ENCODE measurements at regions of chr13 and their contacts with region 1.

Region 1: DNA sequence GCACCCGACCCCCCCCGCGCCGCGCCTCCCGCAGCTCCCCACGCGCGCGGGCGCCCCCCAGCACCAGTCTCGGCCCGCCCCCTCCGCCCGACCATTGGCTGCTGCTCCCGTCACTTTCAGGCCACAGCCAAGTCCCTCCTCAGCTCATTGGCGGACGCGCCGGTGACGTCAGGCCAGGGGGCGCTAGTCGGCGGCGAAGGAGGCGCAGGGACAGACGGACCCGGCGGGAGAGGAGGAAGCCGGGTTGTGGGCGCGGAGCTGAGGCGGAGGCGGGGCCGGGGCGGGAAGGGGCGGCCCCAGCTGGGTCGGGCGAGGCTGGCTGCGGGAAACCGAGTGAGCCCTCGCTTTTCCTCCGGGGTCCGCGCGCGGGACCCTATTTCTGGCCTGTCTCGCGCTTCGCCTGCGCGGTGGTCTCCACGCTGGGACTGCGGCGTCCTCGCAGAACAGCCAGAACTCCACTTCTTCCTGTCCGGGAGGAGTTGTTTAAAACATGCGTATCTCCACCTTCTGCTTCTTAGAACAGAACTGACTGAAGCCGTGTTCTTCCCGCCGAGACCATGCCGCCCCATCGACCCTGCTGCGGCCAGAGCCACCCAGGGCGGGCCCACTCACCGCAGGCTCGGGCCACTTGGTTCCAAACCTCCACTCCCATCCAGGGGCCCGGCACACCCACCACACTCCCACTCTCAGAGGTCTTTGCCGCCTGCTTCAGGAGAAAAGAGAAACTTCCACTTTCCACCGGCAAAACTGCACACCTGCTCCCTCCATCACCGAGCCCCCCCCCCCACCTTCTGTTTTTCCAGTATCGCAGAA is 459 bp upstream of the TMTC4 start:
- DNase-seq: peak; percentile 99 to 100 (median 100)
- ATAC-seq: peak; percentile 92
- H3K4me3 ChIP-seq: peak overlapping the region; percentile 88 to 98
- H3K4me3 Mint-ChIP-seq: peak overlapping the region; percentile 95
- H3K27ac ChIP-seq: peak overlapping the region; percentile 55 to 78
- H3K27ac Mint-ChIP-seq: peak overlapping the region; percentile 89
- H3K4me1 ChIP-seq: peaks cover 14% of the 10 kb centered on the region
- H3K4me1 Mint-ChIP-seq: peaks cover 29% of the 10 kb centered on the region
- H3K27me3 ChIP-seq: no peaks in the 10 kb centered on the region
- H3K27me3 Mint-ChIP-seq: no peaks in the 10 kb centered on the region
- CTCF ChIP-seq: no peak

Region 2: DNA sequence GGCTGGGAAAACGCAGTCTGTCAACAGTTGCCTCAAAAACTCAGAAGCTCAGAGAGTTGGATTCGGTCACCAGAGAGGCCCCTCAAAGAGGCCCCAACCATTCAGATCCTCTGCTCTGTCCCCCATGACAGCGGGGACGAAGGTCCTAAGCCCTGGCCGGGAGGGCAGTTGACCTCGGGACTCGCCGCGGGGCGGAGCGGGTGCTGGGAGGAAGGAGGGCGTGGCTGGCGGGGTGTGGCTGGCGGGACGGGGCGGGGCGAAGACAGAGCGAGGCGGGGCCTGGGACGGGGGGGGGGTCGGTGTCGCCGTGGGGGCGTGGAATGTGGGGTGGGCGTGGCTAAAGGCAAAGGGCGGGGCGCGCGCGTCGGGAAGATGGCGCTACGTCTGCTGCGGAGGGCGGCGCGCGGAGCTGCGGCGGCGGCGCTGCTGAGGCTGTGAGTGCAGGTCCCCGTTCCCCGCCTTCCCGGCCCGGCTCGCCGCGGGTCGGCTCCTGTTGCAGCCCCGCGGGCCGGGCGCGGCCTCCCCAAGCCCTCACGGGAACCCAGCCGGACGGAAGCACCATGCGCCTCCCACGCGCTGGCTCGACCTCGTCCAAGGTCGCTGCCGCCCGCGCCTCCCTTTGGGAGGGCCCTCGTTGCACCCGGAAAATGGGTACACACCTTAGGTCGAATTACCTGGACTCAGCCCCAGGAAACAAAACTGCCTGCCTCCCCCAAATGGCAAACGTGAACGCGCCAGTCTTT is 1068.6 kb before region 1 on chr13:
- CTCF ChIA-PET with region 1: no interaction called
- POLR2A ChIA-PET with region 1: interaction called, 3 read pairs
- intact Hi-C with region 1: loop called (anchors 1 kb)
- DNase-seq: peak; percentile 82 to 95 (median 91)
- ATAC-seq: peak; percentile 93
- H3K4me3 ChIP-seq: peak within 1 kb of the TSS; percentile 89 to 93
- H3K4me3 Mint-ChIP-seq: peak within 1 kb of the TSS; percentile 92
- H3K27ac ChIP-seq: peak within 1 kb of the TSS; percentile 72 to 81
- H3K27ac Mint-ChIP-seq: peak within 1 kb of the TSS; percentile 92
- H3K4me1 ChIP-seq: peaks cover 23% of the 10 kb centered on the region
- H3K4me1 Mint-ChIP-seq: peaks cover 45% of the 10 kb centered on the region
- H3K27me3 ChIP-seq: no peaks in the 10 kb centered on the region
- H3K27me3 Mint-ChIP-seq: no peaks in the 10 kb centered on the region
- CTCF ChIP-seq: no peak

Region 3: GRCh38 chr13:99995589-99996380 is 679.3 kb before region 1 on chr13:
- CTCF ChIA-PET with region 1: no interaction called
- POLR2A ChIA-PET with region 1: no interaction called
- intact Hi-C with region 1: loop called in 1 of 2 experiments (anchors 10 kb)
- DNase-seq: no peak
- ATAC-seq: no peak
- H3K4me3 ChIP-seq: no peak overlapping the region
- H3K4me3 Mint-ChIP-seq: no peak overlapping the region
- H3K27ac ChIP-seq: no peak overlapping the region
- H3K27ac Mint-ChIP-seq: no peak overlapping the region
- H3K4me1 ChIP-seq: no peaks in the 10 kb centered on the region
- H3K4me1 Mint-ChIP-seq: peaks cover 4% of the 10 kb centered on the region
- H3K27me3 ChIP-seq: peaks cover 67 to 73% of the 10 kb centered on the region in 2 experiments
- H3K27me3 Mint-ChIP-seq: peaks cover 73% of the 10 kb centered on the region
- CTCF ChIP-seq: no peak

Region 4: DNA sequence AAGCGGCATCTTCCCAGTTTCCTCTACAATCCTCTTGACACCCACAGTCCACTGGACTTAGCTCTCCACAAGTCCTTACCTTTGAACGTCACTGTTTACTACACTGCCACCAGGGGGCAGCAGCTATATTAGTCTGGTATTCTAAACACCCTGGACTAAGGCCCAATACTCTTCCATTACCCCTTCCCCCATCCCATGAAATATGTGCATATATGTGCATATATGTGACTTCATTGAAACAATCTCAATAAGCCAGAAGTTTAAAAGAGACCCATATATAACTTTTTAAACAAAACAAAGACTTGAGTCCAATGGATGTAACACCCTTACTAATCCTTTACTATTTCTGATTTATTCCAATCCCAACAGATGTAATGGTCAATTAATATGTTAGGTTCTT is 101.9 kb before region 1 on chr13:
- CTCF ChIA-PET with region 1: interaction called, 10 read pairs
- POLR2A ChIA-PET with region 1: interaction called, 4 read pairs
- intact Hi-C with region 1: loop called (anchors 1 to 5 kb)
- DNase-seq: peak; percentile 23 to 85 (median 80)
- ATAC-seq: peak; percentile 78
- H3K4me3 ChIP-seq: no peak overlapping the region
- H3K4me3 Mint-ChIP-seq: no peak overlapping the region
- H3K27ac ChIP-seq: no peak overlapping the region
- H3K27ac Mint-ChIP-seq: no peak overlapping the region
- H3K4me1 ChIP-seq: no peaks in the 10 kb centered on the region
- H3K4me1 Mint-ChIP-seq: peaks cover 13% of the 10 kb centered on the region
- H3K27me3 ChIP-seq: no peaks in the 10 kb centered on the region
- H3K27me3 Mint-ChIP-seq: no peaks in the 10 kb centered on the region
- CTCF ChIP-seq: peak; percentile 85

Region 5: GRCh38 chr13:102394158-102395053 is 1719.4 kb after region 1 on chr13:
- CTCF ChIA-PET with region 1: no interaction called
- POLR2A ChIA-PET with region 1: no interaction called
- intact Hi-C with region 1: loop called (anchors 5 to 10 kb)
- DNase-seq: peak; percentile 88 to 98 (median 97)
- ATAC-seq: peak; percentile 90
- H3K4me3 ChIP-seq: peak overlapping the region; percentile 79 to 96
- H3K4me3 Mint-ChIP-seq: peak overlapping the region; percentile 88
- H3K27ac ChIP-seq: peak overlapping the region; percentile 65 to 76
- H3K27ac Mint-ChIP-seq: peak overlapping the region; percentile 82
- H3K4me1 ChIP-seq: peaks cover 14% of the 10 kb centered on the region
- H3K4me1 Mint-ChIP-seq: peaks cover 8% of the 10 kb centered on the region
- H3K27me3 ChIP-seq: peaks cover 1 to 2% of the 10 kb centered on the region in 2 experiments
- H3K27me3 Mint-ChIP-seq: peaks cover 12% of the 10 kb centered on the region
- CTCF ChIP-seq: no peak

Measured in CD8-positive, alpha-beta T cell (primary cell).